Sigmoid colon (tissue), 7 donors: ENCODE measurements at regions of chr10 and their contacts with region 1.

Region 1: DNA sequence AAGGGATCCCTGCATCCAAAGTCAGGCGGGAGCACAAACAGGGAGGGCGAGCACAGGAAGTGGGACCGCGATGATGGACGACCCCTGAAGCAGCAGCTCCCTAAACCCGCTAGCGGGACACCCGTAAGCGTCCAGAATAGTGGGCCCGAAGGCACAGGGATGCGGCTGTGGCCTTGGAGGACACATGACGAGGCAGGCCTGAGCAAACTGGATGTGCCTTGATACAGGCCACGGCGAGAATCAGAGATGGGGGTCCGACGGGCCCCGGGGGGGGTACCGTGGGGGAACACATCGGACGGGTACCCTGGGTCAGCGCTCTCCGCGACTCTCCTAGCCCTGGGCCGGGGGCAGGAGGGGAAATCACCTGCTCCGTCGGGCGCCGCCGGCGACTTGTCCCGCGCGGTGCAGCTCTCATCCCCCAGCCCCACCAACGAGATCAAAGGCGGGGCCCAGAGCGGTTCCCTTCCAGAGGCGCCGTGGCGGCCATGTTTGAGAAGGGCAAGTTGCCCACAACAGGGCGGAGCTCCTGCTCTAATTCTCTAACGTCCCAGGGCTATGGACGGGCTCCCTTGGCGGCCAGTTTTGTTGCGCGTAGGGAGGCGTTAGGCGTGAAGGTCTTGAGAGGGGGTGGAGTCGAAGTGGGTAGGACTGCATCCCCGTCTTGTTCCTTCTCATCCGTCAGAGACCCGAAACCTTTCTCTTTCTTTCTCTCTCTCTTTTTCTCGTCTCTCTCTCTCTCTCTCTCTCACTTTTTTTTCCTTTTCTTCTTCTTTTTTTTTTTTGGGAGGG is at the start of gene CUEDC2:
- DNase-seq: peak; percentile 98
- H3K4me3 ChIP-seq: peak within 1 kb of the TSS; percentile 83 to 99 (median 90)
- H3K27ac ChIP-seq: peak within 1 kb of the TSS; percentile 84 to 95 (median 86)
- H3K4me1 ChIP-seq: peaks cover 0 to 16% (median 12%) of the 10 kb centered on the region in 4 donors
- H3K27me3 ChIP-seq: peaks cover 0 to 28% (median 5%) of the 10 kb centered on the region in 3 donors
- CTCF ChIP-seq: no peak
- EP300 ChIP-seq: peak in 1 of 4 donors; percentile 19
- POLR2A ChIP-seq: peak in 1 of 2 donors; percentile 16
- total RNA-seq, gene CUEDC2: 65.2 to 93.5 (median 82.4) TPM

Region 2: DNA sequence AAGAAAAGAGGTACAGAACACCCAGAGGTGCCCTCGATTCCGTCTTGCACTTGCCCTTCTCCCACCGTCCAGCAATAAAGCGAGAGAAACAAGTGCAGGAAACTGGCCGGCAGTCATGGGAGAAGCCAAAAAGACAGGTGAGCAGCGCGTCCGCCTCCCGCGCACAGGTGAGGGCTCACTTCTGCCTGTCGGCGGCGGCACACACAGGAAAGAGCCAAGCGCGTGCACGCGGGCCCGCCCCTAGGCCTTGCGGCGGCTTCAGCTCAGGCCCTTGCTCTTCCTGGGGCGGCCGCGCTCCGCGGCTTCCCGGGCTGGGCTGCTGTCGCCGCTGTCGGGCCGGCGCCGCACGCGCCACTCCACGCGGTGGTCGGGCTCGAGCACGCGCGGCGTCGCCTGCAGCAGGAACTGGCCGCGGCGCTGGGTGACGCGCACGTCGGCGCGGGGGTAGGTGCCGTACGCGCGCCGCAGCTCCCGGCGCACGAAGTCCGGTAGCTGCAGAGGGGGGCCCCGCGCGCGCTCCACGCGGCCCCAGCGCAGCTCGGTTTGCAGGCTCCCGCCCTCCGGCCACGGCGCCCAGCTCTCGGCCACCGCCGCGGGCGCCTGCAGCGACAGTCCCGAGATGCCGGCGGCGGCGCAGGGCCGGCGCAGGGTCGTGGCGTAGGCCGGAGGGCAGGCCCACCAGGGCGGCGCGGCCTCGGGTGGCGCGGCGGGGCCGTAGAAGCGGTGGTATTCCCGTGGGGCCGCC is 18.0 kb after region 1 on chr10:
- intact Hi-C with region 1: loop called (anchors 2 kb)
- DNase-seq: peak; percentile 88
- H3K4me3 ChIP-seq: peak overlapping the region; percentile 60 to 86 (median 70)
- H3K27ac ChIP-seq: peak overlapping the region; percentile 83 to 88 (median 84)
- H3K4me1 ChIP-seq: peaks cover 0 to 20% (median 17%) of the 10 kb centered on the region in 4 donors
- H3K27me3 ChIP-seq: no peaks in the 10 kb centered on the region
- CTCF ChIP-seq: no peak
- EP300 ChIP-seq: no peak
- POLR2A ChIP-seq: no peak